GM18951 (cell line): ENCODE measurements at regions of chr2 and their contacts with region 1.

Region 1: GRCh38 chr2:30686000-30686399 is 121.2 kb downstream of the CAPN13 start:
- POLR2A ChIP-seq: no peak

Region 2: DNA sequence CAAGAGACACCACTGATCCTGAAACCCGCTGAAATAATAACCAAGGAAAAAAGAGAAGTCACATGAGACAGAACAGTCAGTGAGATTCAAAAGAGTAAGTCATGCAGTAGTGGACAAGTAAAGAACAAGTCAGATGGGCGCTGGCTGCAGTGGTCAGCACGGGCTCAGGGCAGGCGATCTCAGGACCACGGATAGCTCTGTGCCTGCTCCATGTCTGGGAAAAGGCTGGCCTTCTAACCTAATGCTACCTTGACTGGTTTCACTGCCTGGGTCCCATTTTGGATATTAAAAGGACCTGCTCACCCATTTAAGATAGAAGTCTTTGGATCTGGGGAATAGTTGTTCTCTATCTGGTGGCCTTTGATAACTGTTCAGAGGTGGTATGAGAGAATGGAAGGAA is 300.7 kb before region 1 on chr2:
- in situ Hi-C with region 1: loop called (anchors 25 kb)
- POLR2A ChIP-seq: no peak

Region 3: DNA sequence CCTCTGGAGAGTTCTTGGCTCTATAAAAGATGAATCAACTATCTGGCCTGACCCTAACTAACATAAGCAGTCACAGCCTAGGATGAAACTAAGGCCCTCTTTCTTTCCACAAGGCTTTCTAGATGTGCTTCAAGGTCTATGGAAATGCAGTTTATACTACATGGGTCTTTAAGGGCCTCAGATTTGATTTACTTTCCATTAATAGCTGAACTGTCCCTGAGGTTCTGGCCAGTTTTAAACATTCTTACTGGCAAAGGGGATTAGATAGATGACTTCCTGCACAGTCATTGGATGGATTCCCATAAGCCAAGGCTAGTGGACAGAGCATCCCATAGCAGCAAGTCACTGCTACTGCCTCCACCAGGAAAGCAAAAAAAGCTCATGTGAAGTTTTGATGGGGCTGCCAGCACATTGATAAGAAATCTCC is 277.0 kb before region 1 on chr2:
- in situ Hi-C with region 1: no loop called
- POLR2A ChIP-seq: no peak

Region 4: GRCh38 chr2:30730736-30731647 is 45.0 kb after region 1 on chr2:
- in situ Hi-C with region 1: no loop called
- POLR2A ChIP-seq: no peak

Region 5: DNA sequence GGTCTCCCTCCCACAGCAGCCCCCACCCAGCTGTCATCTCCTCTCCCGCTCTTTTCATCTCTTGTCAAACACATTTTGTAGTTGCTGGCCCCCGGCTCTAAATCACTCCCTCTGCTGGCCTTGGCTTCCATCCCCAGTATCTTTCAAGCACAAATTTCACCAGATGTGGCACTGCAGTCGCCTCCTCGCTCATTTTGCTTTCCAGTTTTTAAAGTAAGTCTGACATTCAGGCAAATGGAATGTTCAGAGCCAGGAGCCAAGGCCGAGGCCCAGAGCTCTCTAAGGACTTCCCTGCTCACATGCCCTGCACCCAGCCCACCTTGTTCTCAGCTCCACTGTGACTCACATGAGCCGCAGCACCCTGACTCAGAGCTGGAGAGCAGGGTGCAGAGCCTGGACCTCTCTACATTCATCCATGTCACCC is 293.8 kb after region 1 on chr2:
- in situ Hi-C with region 1: no loop called
- POLR2A ChIP-seq: no peak